ENCODE measurements at regions of chr2 and their contacts with region 1.

Region 1: DNA sequence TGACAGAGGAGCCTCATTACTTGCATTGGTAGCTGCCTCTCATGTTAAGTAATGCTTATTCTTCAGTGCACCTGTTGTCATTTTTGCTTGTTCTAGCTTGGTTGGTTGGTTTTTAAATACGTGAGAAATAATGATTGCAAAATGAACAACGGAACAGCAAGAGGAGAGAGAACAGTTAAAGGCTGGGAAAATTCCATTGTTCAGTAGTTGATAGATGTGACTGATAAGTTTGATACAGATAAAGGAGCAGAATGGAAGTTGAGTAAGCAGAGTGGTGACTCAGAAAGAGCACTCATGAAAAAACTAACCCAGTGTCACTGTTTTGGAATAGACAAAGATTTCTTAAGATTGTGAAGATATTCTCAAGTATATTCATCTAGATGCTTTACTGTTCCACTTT is 50.5 kb downstream of the MTA3 start:
- DNase-seq: no peak
- ATAC-seq: no peak
- H3K4me3 ChIP-seq: no peak overlapping the region
- H3K4me3 Mint-ChIP-seq: no peak overlapping the region
- H3K27ac ChIP-seq: no peak overlapping the region
- H3K27ac Mint-ChIP-seq: peak overlapping the region; percentile 50 to 56
- H3K4me1 ChIP-seq: no peaks in the 10 kb centered on the region
- H3K4me1 Mint-ChIP-seq: peaks cover 6 to 14% (median 8%) of the 10 kb centered on the region in 3 donors
- H3K27me3 ChIP-seq: no peaks in the 10 kb centered on the region
- H3K27me3 Mint-ChIP-seq: no peaks in the 10 kb centered on the region

Region 2: DNA sequence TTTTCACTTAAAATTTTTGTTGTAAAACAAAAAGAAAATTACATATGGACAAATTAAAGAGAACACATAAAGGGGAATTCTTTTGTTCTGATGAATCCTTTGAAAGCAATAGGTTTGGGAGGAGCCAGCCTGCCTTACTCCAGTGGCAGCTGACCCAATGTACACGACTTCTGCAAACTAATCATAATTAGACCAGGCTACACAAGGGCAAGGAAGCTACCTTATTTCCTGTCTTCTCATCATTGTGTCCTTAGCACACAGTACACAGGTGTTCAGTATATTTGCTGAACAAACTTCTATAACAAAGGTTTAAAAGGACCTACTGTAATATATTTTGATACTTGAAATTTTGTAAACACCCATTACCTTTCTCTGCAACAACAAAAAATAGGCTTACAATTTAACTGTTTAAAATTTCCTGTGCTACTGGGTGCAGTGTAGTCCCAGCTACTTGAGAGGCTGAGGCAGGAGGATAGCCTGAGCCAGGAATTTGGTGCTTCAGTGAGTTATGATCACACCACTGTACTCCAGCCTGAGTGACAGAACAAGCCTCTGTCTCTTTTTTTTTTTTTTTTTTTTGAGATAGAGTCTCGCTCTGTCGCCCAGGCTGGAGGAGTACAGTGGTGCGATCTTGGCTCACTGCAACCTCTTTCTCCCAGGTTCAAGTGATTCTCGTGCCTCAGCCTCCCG is 144.1 kb before region 1 on chr2:
- CTCF ChIA-PET with region 1: no interaction called
- POLR2A ChIA-PET with region 1: no interaction called
- DNase-seq: no peak
- ATAC-seq: no peak
- H3K4me3 ChIP-seq: no peak overlapping the region
- H3K4me3 Mint-ChIP-seq: no peak overlapping the region
- H3K27ac ChIP-seq: no peak overlapping the region
- H3K27ac Mint-ChIP-seq: no peak overlapping the region
- H3K4me1 ChIP-seq: no peaks in the 10 kb centered on the region
- H3K4me1 Mint-ChIP-seq: no peaks in the 10 kb centered on the region
- H3K27me3 ChIP-seq: peaks cover 0 to 3% of the 10 kb centered on the region in 2 experiments
- H3K27me3 Mint-ChIP-seq: no peaks in the 10 kb centered on the region

Region 3: GRCh38 chr2:42639340-42640077 is 20.5 kb after region 1 on chr2:
- CTCF ChIA-PET with region 1: no interaction called
- POLR2A ChIA-PET with region 1: interaction called in 1 of 2 experiments, 10 read pairs
- DNase-seq: no peak
- ATAC-seq: no peak
- H3K4me3 ChIP-seq: no peak overlapping the region
- H3K4me3 Mint-ChIP-seq: peak overlapping the region in 2 of 3 donors; percentile 40 to 47
- H3K27ac ChIP-seq: no peak overlapping the region
- H3K27ac Mint-ChIP-seq: peak overlapping the region in 1 of 2 donors; percentile 16
- H3K4me1 ChIP-seq: peaks cover 0 to 26% of the 10 kb centered on the region in 2 experiments
- H3K4me1 Mint-ChIP-seq: peaks cover 6 to 20% (median 13%) of the 10 kb centered on the region in 3 donors
- H3K27me3 ChIP-seq: no peaks in the 10 kb centered on the region
- H3K27me3 Mint-ChIP-seq: no peaks in the 10 kb centered on the region

Measured in T-cell (primary cell).